ENCODE measurements at regions of chr15 and their contacts with region 1.

Region 1: DNA sequence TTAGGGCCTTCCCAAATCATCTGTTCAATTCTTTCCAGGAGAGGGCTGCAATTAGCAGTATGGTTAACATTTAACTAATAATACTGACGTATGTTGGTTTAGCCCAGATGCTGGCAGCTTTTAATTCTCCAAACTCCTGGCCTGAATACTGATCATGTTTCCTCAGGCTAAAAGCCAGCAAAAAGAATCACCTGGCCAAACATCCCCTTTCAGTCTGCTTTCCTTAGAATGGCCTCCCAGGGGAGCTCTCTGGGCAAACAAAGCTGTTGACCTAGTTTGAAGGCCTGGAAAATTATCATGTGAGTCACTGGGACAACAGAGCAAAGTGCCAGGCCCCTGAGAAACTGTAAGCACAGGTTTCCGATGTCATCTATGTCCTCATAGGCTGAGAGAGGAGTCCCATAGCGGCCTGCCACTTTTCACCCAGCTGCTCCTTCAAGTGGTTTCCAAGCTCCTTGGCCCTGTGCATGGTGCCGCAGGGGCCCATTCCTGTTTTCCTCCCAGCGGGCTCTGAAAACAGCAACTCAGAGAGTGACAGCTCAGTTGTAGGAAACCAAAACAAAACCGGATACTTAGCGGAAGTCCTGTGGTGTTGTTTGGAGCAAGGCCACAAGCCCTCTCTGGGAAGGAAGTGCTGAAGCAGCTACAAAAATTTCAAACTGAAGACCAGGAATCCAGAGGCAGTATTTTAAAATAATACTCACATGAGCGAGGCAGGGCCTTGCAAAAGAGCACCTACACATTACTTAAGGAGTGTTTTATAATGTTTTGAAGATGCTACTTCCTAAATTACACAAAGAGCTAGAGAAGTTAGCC is 36.5 kb upstream of the RAB11A start:
- DNase-seq: peak; percentile 100
- ATAC-seq: peak; percentile 96
- H3K4me3 ChIP-seq: peak overlapping the region; percentile 57 to 74 (median 66)
- H3K27ac ChIP-seq: peak overlapping the region; percentile 100
- H3K4me1 ChIP-seq: peaks cover 84% of the 10 kb centered on the region
- H3K27me3 ChIP-seq: no peaks in the 10 kb centered on the region
- CTCF ChIP-seq: peak; percentile 62
- EP300 ChIP-seq: peak; percentile 88 to 98
- POLR2A ChIP-seq: peak; percentile 78 to 88
- RAD21 ChIP-seq: peak; percentile 51

Region 2: DNA sequence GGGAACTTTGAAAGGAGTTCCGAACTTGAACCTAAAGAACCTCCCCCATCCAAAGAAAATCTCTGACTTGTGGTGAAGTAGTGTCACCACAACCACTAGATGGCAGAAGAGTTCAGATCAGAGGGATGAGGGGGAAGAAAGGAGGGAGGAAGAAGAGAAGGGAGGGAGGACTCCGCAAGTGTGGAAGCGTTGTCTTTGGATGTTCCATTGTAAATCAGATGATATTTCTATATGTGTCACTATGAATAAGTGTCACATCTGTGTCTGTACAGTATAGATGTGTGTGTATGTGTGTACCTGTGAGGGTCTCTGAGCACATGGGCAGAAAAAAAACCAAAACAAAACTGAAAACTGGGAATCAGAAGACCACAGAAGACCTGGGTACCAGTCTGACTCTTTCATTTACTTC is 194.1 kb before region 1 on chr15:
- CTCF ChIA-PET with region 1: no interaction called
- POLR2A ChIA-PET with region 1: no interaction called
- in situ Hi-C with region 1: no loop called
- intact Hi-C with region 1: loop called (anchors 2 kb)
- DNase-seq: peak; percentile 57
- ATAC-seq: peak; percentile 54
- H3K4me3 ChIP-seq: no peak overlapping the region
- H3K27ac ChIP-seq: no peak overlapping the region
- H3K4me1 ChIP-seq: peaks cover 5% of the 10 kb centered on the region; the same call in 1 of the 2 replicates
- H3K27me3 ChIP-seq: no peaks in the 10 kb centered on the region; a peak in 1 of 5 replicates
- CTCF ChIP-seq: peak; percentile 86
- EP300 ChIP-seq: no peak
- POLR2A ChIP-seq: no peak
- RAD21 ChIP-seq: peak; percentile 56

Region 3: GRCh38 chr15:65792130-65792987 is 40.4 kb before region 1 on chr15 and contains the start of gene DENND4A:
- CTCF ChIA-PET with region 1: interaction called, 5 read pairs
- POLR2A ChIA-PET with region 1: interaction called, 35 read pairs
- in situ Hi-C with region 1: no loop called
- intact Hi-C with region 1: loop called (anchors 2 kb)
- DNase-seq: peak; percentile 93
- ATAC-seq: peak; percentile 91
- H3K4me3 ChIP-seq: peak within 1 kb of the TSS; percentile 84 to 98 (median 88)
- H3K27ac ChIP-seq: peak within 1 kb of the TSS; percentile 87
- H3K4me1 ChIP-seq: peaks cover 49% of the 10 kb centered on the region
- H3K27me3 ChIP-seq: no peaks in the 10 kb centered on the region; a peak in 1 of 5 replicates
- CTCF ChIP-seq: peak; percentile 12; the same call in 1 of the 2 replicates
- EP300 ChIP-seq: 0 out of 4 replicates have a peak, but pooled peaks of 1 of the 2 experiments have one; percentile 3
- POLR2A ChIP-seq: peak; percentile 86 to 90
- RAD21 ChIP-seq: no peak
- total RNA-seq, gene DENND4A: 13.2 and 21.1 TPM in 2 replicates

Region 4: DNA sequence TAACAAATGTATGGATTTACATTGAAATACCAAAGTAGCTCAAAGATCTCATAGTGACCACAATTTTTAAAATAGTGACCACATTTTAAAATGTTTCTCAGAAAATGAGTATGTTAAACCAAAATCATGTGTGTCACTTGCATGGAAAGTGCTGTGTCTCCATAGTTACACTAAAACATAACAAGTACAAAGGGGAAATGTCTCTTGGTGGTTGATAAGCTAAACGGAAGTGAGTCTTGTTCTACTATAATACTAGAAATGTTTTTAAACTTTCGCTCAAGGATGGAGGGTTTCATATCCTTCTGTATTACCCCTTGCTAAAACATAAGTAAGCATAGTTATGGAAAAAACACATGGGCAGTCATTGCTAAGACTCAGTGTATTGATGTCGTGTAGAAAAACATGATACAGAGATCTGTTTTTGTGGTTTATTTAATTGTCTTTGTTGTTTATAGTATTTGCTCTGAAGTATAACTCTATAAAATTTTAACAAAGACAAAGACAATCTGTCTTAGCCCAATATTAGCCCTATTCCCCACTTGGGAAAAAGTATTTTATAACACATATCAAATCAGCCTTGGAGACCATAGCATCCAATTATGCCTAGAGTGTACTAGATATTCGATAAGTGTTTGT is 13.7 kb before region 1 on chr15:
- CTCF ChIA-PET with region 1: no interaction called
- POLR2A ChIA-PET with region 1: interaction called, 37 read pairs
- in situ Hi-C with region 1: no loop called
- intact Hi-C with region 1: no loop called
- DNase-seq: no peak
- ATAC-seq: no peak
- H3K4me3 ChIP-seq: no peak overlapping the region
- H3K27ac ChIP-seq: peak overlapping the region; percentile 25
- H3K4me1 ChIP-seq: peaks cover 33% of the 10 kb centered on the region
- H3K27me3 ChIP-seq: no peaks in the 10 kb centered on the region
- CTCF ChIP-seq: no peak
- EP300 ChIP-seq: no peak
- POLR2A ChIP-seq: no peak
- RAD21 ChIP-seq: no peak